Activated T-helper 1 cell treated with anti-CD3 and anti-CD28 coated beads, Interleukin-12 subunit alpha, Interleukin-12 subunit beta, Interleukin-2, Interleukin-4 antibody, amounts not matched to agents 30 ng/mL and 10 ng/mL and 1 ng/mL, durations not matched to agents 14 hours and 24 hours and 36 hours (primary cell): ENCODE measurements at regions of chr19 and their contacts with region 1.

Region 1: DNA sequence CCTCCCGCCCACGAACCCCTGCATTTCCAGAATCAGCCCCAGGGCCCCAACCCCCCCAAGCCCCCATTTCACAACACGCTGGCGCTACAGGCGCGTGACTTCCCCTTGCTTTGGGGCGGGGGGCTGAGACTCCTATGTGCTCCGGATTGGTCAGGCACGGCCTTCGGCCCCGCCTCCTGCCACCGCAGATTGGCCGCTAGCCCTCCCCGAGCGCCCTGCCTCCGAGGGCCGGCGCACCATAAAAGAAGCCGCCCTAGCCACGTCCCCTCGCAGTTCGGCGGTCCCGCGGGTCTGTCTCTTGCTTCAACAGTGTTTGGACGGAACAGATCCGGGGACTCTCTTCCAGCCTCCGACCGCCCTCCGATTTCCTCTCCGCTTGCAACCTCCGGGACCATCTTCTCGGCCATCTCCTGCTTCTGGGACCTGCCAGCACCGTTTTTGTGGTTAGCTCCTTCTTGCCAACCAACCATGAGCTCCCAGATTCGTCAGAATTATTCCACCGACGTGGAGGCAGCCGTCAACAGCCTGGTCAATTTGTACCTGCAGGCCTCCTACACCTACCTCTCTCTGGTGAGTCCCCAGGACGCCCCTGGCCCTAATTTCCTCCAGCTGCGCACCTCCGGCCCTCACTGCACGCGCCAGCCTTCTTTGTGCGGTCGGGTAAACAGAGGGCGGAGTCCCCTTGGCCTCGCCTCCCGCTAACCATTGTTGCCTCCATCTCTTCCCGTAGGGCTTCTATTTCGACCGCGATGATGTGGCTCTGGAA is at the start of gene FTL:
- DNase-seq: peak; percentile 91
- H3K4me3 Mint-ChIP-seq: peak within 1 kb of the TSS; percentile 95
- H3K27ac Mint-ChIP-seq: peak within 1 kb of the TSS; percentile 96
- H3K4me1 Mint-ChIP-seq: peaks cover 58% of the 10 kb centered on the region
- H3K27me3 Mint-ChIP-seq: no peaks in the 10 kb centered on the region
- total RNA-seq, gene FTL: 651 and 662 TPM in 2 replicates

Region 2: GRCh38 chr19:48720613-48721296 is 244.5 kb before region 1 on chr19:
- intact Hi-C with region 1: loop called (anchors 10 kb)
- DNase-seq: peak; percentile 91
- H3K4me3 Mint-ChIP-seq: peak overlapping the region; percentile 92
- H3K27ac Mint-ChIP-seq: peak overlapping the region; percentile 98
- H3K4me1 Mint-ChIP-seq: peaks cover 23% of the 10 kb centered on the region
- H3K27me3 Mint-ChIP-seq: no peaks in the 10 kb centered on the region

Region 3: GRCh38 chr19:48858984-48859710 is 106.1 kb before region 1 on chr19:
- intact Hi-C with region 1: loop called (anchors 2 kb)
- DNase-seq: peak; percentile 70
- H3K4me3 Mint-ChIP-seq: peak overlapping the region; percentile 91
- H3K27ac Mint-ChIP-seq: peak overlapping the region; percentile 91
- H3K4me1 Mint-ChIP-seq: no peaks in the 10 kb centered on the region
- H3K27me3 Mint-ChIP-seq: no peaks in the 10 kb centered on the region

Region 4: GRCh38 chr19:48933382-48933932 is 31.8 kb before region 1 on chr19 and contains the start of gene DHDH:
- intact Hi-C with region 1: loop called (anchors 1 kb)
- DNase-seq: peak; percentile 85
- H3K4me3 Mint-ChIP-seq: peak within 1 kb of the TSS; percentile 83
- H3K27ac Mint-ChIP-seq: peak within 1 kb of the TSS; percentile 61
- H3K4me1 Mint-ChIP-seq: peaks cover 14% of the 10 kb centered on the region
- H3K27me3 Mint-ChIP-seq: peaks cover 11% of the 10 kb centered on the region
- total RNA-seq, gene DHDH: not detected in 2 replicates

Region 5: DNA sequence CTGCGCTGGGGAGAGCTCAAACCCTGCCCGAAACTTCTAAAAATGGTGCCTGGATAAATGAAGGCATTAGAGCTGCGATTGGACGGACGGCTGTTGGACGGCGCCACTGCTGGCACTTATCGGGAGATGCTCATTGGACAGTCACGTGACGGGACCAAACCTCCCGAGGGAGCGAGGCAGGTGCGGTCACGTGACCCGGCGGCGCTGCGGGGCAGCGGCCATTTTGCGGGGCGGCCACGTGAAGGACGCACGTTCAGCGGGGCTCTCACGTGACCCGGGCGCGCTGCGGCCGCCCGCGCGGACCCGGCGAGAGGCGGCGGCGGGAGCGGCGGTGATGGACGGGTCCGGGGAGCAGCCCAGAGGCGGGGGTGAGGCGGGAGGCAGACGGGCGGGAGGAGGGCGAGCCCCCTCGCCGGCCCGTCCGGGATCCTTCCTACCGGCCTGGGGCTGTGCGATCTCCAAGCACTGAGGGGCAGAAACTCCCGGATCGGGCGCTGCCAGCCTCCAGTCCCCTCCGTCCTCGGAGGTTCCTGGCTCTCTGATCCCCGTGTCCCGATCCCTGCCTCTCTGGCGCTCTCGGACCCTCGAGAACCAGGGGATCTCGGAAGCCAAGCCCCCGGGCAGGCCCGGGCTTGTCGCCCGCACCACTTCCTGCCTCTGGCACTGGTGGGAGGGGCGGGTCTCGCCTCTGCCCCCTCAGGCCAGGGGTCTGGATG is 10.5 kb before region 1 on chr19 and contains the start of gene BAX:
- intact Hi-C with region 1: loop called (anchors 1 kb)
- DNase-seq: peak; percentile 92
- H3K4me3 Mint-ChIP-seq: peak within 1 kb of the TSS; percentile 95
- H3K27ac Mint-ChIP-seq: peak within 1 kb of the TSS; percentile 95
- H3K4me1 Mint-ChIP-seq: peaks cover 26% of the 10 kb centered on the region
- H3K27me3 Mint-ChIP-seq: no peaks in the 10 kb centered on the region
- total RNA-seq, gene BAX: 292 and 295 TPM in 2 replicates